ENCODE measurements at regions of chr6 and their contacts with region 1.

Region 1: GRCh38 chr6:56843573-56844349 is 111.1 kb upstream of the BEND6 start:
- DNase-seq: peak; percentile 73
- ATAC-seq: peak; percentile 79
- H3K4me3 ChIP-seq: peak overlapping the region; percentile 92
- H3K27ac ChIP-seq: peak overlapping the region; percentile 82
- H3K4me1 ChIP-seq: peaks cover 2% of the 10 kb centered on the region; the same call in 1 of the 2 replicates
- H3K27me3 ChIP-seq: no peaks in the 10 kb centered on the region
- CTCF ChIP-seq: peak; percentile 65
- POLR2A ChIP-seq: no peak
- RAD21 ChIP-seq: peak; percentile 65

Region 2: DNA sequence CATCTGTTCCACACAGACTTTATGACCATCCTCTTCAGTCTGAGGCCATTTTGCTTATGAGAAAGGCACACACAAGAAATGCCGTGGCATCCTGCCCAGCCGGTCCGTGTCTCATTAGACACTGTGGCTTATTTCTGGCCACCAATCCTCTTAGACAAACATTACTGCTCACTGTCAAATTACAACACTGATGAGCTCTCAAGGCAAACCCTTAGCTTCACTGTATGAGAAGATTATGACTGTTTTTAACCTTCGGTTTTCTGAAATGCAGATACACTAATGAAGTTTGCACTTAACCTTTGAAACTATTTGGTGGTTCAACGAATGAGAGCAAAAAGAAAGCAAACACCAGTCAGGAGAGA is 150.5 kb before region 1 on chr6:
- CTCF ChIA-PET with region 1: interaction called, 4 read pairs
- POLR2A ChIA-PET with region 1: no interaction called
- dilution Hi-C with region 1: no loop called
- in situ Hi-C with region 1: loop called (anchors 10 kb)
- intact Hi-C with region 1: loop called (anchors 5 kb)
- DNase-seq: peak; percentile 87
- ATAC-seq: peak; percentile 47
- H3K4me3 ChIP-seq: peak overlapping the region; percentile 45; the same call in 1 of the 2 replicates
- H3K27ac ChIP-seq: peak overlapping the region; percentile 99; the same call in 1 of the 2 replicates
- H3K4me1 ChIP-seq: peaks cover 8% of the 10 kb centered on the region
- H3K27me3 ChIP-seq: no peaks in the 10 kb centered on the region
- CTCF ChIP-seq: no peak
- POLR2A ChIP-seq: peak; percentile 58; the same call in 1 of the 2 replicates
- RAD21 ChIP-seq: no peak

Region 3: DNA sequence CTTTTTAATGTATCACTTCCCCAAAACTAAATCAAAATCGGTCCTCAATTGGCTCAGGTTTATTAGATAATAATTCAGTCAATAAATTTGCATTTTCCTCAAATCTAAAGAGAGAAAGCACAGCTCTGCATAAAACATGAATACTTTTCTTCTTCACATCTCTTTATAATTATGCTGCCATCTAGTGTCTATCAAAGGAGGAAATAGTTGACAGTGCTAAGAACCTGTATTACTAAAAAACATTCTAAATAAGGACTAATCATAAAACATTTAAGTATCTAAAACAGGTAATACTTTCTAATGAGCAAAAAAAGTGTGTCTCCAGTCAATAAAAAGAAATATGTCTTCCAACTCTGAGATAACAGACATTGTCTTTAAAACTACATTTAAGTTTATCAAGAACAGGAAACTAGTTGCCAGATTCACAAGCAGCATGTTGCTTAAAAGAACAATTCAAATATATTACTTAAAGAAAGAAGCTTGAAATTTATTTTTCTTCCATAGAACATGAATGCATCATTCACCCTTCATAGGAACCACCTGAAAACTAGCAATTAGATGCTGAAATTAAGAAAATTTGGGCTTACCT is 144.6 kb before region 1 on chr6:
- CTCF ChIA-PET with region 1: interaction called, 3 read pairs
- POLR2A ChIA-PET with region 1: no interaction called
- dilution Hi-C with region 1: no loop called
- in situ Hi-C with region 1: loop called (anchors 10 kb)
- intact Hi-C with region 1: loop called (anchors 5 kb)
- DNase-seq: peak; percentile 53
- ATAC-seq: peak; percentile 74
- H3K4me3 ChIP-seq: no peak overlapping the region
- H3K27ac ChIP-seq: no peak overlapping the region
- H3K4me1 ChIP-seq: peaks cover 4% of the 10 kb centered on the region
- H3K27me3 ChIP-seq: no peaks in the 10 kb centered on the region
- CTCF ChIP-seq: peak; percentile 55
- POLR2A ChIP-seq: no peak
- RAD21 ChIP-seq: peak; percentile 46

Region 4: DNA sequence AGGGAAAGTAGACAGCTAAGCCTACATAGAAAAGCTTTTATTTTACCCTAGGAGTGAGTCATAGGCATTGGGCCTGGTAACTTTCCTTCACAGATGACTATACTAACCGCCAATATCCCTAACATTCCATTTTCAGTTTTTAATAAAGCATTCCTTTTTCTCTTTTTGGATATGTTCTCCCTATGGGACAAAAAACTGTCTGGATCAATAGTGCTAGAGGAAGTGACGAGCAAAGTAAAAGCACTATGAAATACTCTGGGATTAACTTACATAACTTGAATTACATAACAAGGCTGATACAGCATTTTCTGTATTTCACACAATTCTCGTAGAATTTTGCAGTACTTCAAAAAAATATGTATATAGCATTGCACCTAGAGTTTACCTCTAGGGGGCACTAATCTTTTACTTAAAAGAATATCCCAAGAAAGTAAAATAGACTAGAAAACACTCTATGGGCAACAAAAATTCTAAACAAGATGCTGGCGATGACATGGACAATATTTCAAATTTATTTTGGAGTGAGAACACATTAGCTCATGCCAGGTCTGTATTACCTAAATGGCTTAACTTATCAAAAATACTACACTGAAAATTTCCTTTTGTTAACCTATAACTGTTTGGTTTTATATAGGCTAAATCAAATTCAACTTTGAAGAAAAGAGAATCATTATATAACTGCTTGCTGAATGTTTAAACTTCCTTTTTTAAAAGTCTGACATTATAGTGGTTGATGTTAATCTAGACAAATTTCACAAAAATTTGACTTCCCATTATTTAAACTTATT is 134.8 kb before region 1 on chr6:
- CTCF ChIA-PET with region 1: interaction called, 5 read pairs
- POLR2A ChIA-PET with region 1: no interaction called
- dilution Hi-C with region 1: no loop called
- in situ Hi-C with region 1: no loop called
- intact Hi-C with region 1: loop called (anchors 5 kb)
- DNase-seq: peak; percentile 76
- ATAC-seq: peak; percentile 48
- H3K4me3 ChIP-seq: no peak overlapping the region; the same call in 1 of the 2 replicates
- H3K27ac ChIP-seq: no peak overlapping the region
- H3K4me1 ChIP-seq: peaks cover 17% of the 10 kb centered on the region
- H3K27me3 ChIP-seq: no peaks in the 10 kb centered on the region
- CTCF ChIP-seq: peak; percentile 54
- POLR2A ChIP-seq: no peak
- RAD21 ChIP-seq: peak; percentile 41

Region 5: GRCh38 chr6:56716229-56716628 is 127.5 kb before region 1 on chr6:
- CTCF ChIA-PET with region 1: no interaction called
- POLR2A ChIA-PET with region 1: interaction called, 12 read pairs
- dilution Hi-C with region 1: no loop called
- in situ Hi-C with region 1: no loop called
- intact Hi-C with region 1: loop called (anchors 5 kb)
- DNase-seq: peak; percentile 33
- ATAC-seq: no peak
- H3K4me3 ChIP-seq: no peak overlapping the region
- H3K27ac ChIP-seq: peak overlapping the region; percentile 33; the same call in 1 of the 2 replicates
- H3K4me1 ChIP-seq: peaks cover 24% of the 10 kb centered on the region
- H3K27me3 ChIP-seq: no peaks in the 10 kb centered on the region
- CTCF ChIP-seq: no peak
- POLR2A ChIP-seq: no peak
- RAD21 ChIP-seq: no peak

Region 6: GRCh38 chr6:56757588-56757984 is 86.2 kb before region 1 on chr6:
- CTCF ChIA-PET with region 1: interaction called, 3 read pairs
- POLR2A ChIA-PET with region 1: interaction called, 4 read pairs
- dilution Hi-C with region 1: no loop called
- in situ Hi-C with region 1: no loop called
- intact Hi-C with region 1: loop called (anchors 5 kb)
- DNase-seq: peak; percentile 71
- ATAC-seq: peak; percentile 52
- H3K4me3 ChIP-seq: no peak overlapping the region
- H3K27ac ChIP-seq: peak overlapping the region; percentile 95
- H3K4me1 ChIP-seq: peaks cover 22% of the 10 kb centered on the region
- H3K27me3 ChIP-seq: no peaks in the 10 kb centered on the region
- CTCF ChIP-seq: peak; percentile 58
- POLR2A ChIP-seq: no peak
- RAD21 ChIP-seq: peak; percentile 66

Region 7: GRCh38 chr6:56796196-56796532 is 47.6 kb before region 1 on chr6:
- CTCF ChIA-PET with region 1: no interaction called
- POLR2A ChIA-PET with region 1: no interaction called
- dilution Hi-C with region 1: no loop called
- in situ Hi-C with region 1: no loop called
- intact Hi-C with region 1: loop called (anchors 5 kb)
- DNase-seq: peak; percentile 43
- ATAC-seq: peak; percentile 62
- H3K4me3 ChIP-seq: no peak overlapping the region
- H3K27ac ChIP-seq: no peak overlapping the region
- H3K4me1 ChIP-seq: peaks cover 14% of the 10 kb centered on the region
- H3K27me3 ChIP-seq: no peaks in the 10 kb centered on the region
- CTCF ChIP-seq: no peak
- POLR2A ChIP-seq: no peak
- RAD21 ChIP-seq: no peak

Measured in IMR-90 (cell line).